ENCODE measurements at regions of chr2 and their contacts with region 1.

Region 1: GRCh38 chr2:60838481-60838880 is 42.9 kb upstream of the REL start:
- DNase-seq: no peak
- H3K4me3 ChIP-seq: no peak overlapping the region
- H3K27me3 ChIP-seq: peaks cover 4% of the 10 kb centered on the region
- CTCF ChIP-seq: no peak

Region 2: GRCh38 chr2:60826111-60826510 is 12.4 kb before region 1 on chr2:
- CTCF ChIA-PET with region 1: interaction called, 3 read pairs
- POLR2A ChIA-PET with region 1: interaction called, 12 read pairs
- DNase-seq: no peak
- H3K4me3 ChIP-seq: no peak overlapping the region
- H3K27me3 ChIP-seq: peaks cover 4% of the 10 kb centered on the region
- CTCF ChIP-seq: no peak

Region 3: GRCh38 chr2:61357681-61358080 is 519.2 kb after region 1 on chr2:
- CTCF ChIA-PET with region 1: no interaction called
- POLR2A ChIA-PET with region 1: no interaction called
- DNase-seq: no peak
- H3K4me3 ChIP-seq: no peak overlapping the region
- H3K27me3 ChIP-seq: no peaks in the 10 kb centered on the region
- CTCF ChIP-seq: no peak